ENCODE measurements at regions of chr16 and their contacts with region 1.

Region 1: GRCh38 chr16:9008601-9009260 is 45.0 kb upstream of the USP7 start:
- DNase-seq: peak; percentile 78
- H3K4me3 Mint-ChIP-seq: no peak overlapping the region
- H3K27ac Mint-ChIP-seq: no peak overlapping the region
- H3K4me1 Mint-ChIP-seq: peaks cover 4% of the 10 kb centered on the region
- H3K27me3 Mint-ChIP-seq: peaks cover 17% of the 10 kb centered on the region

Region 2: DNA sequence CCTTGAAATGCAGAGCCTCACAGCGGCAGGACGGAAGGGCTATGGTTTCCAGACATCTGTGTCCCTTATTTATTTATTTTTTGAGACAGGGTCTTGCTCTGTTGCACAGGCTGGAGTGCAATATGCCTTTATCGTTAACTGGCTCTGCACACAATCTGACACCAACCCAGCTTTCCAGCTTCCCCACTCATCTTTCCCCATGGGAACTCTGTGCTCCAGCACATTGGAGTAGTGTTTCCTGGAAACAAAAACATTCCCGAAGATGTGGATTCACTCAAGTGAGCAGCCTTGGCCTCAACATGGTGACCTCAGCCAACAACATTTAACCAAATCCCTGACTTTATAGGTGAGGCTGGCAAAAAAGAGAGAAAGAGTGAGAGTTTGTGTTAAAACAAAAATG is 725.5 kb before region 1 on chr16:
- CTCF ChIA-PET with region 1: no interaction called
- POLR2A ChIA-PET with region 1: no interaction called
- intact Hi-C with region 1: no loop called
- DNase-seq: no peak
- H3K4me3 Mint-ChIP-seq: no peak overlapping the region
- H3K27ac Mint-ChIP-seq: no peak overlapping the region
- H3K4me1 Mint-ChIP-seq: no peaks in the 10 kb centered on the region
- H3K27me3 Mint-ChIP-seq: no peaks in the 10 kb centered on the region

Region 3: DNA sequence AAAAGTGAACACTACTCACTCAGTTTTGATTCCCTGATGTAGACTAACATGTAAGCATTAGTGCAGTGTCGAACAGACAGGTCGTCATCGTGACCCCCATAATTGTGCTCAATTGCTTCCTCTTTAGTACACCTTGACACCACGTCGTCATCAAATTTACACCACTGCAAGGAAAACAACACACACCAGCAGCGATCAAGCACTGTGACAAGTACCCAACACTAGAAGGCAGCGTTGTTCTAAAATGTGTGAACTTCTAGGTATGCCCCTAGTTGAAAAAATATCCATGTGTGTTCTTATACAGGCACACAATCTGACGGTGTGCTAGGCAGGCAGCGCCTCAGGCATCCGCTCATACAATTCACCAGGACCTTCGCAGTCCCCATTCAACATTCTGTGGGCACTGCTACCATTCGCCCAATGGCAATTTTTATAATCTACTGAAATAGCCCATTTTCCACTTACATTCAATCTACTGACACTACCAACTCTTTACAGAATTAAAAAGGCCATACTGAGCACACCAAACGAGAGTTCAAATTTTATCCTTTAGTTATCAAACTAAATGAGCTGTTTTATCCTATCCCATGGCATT is 103.5 kb before region 1 on chr16:
- CTCF ChIA-PET with region 1: interaction called, 14 read pairs
- POLR2A ChIA-PET with region 1: no interaction called
- intact Hi-C with region 1: no loop called
- DNase-seq: no peak
- H3K4me3 Mint-ChIP-seq: no peak overlapping the region
- H3K27ac Mint-ChIP-seq: peak overlapping the region; percentile 8
- H3K4me1 Mint-ChIP-seq: peaks cover 18% of the 10 kb centered on the region
- H3K27me3 Mint-ChIP-seq: no peaks in the 10 kb centered on the region

Region 4: DNA sequence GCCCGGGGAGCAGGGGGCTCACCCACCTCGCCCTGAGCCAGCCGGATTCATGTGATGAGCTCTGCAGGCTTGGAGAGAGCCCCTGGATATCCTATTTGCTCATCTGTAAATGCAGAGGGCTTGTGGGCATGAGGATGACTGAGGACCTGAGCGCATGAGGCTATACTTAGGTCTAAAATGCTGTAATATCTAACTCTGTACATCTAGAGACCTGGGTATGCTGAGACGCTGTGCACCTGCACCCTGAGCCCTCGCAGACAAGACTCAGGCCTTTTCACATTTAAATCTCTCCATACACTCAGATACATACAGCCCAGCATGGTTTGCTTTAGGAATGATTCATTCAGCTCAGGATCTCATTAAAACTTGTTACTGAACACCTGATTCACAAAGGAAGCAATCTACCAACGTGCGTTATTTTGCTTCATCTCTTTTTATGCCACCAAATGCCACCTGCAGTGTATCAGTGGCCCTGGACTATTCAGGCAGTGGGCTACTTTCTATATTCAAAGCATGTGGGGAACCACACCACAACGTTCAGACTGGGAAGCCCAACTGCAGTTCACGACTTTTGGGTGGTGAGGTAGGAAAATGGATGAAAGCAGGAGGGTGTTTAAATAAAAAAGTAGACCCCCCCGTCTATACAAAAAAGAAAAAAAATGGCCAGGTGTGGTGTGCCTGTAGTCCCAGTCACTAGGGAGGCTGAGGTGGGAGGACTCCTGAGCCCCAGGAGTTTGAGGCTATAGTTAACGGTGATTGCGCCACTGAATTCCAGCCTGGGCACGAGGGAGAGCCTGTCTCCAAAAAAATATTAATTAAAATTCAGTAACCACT is 57.1 kb before region 1 on chr16:
- CTCF ChIA-PET with region 1: interaction called, 12 read pairs
- POLR2A ChIA-PET with region 1: no interaction called
- intact Hi-C with region 1: no loop called
- DNase-seq: no peak
- H3K4me3 Mint-ChIP-seq: peak overlapping the region; percentile 12
- H3K27ac Mint-ChIP-seq: peak overlapping the region; percentile 42
- H3K4me1 Mint-ChIP-seq: peaks cover 89% of the 10 kb centered on the region
- H3K27me3 Mint-ChIP-seq: no peaks in the 10 kb centered on the region

Region 5: GRCh38 chr16:8989099-8989878 is 19.4 kb before region 1 on chr16:
- CTCF ChIA-PET with region 1: interaction called, 11 read pairs
- POLR2A ChIA-PET with region 1: no interaction called
- intact Hi-C with region 1: no loop called
- DNase-seq: no peak
- H3K4me3 Mint-ChIP-seq: no peak overlapping the region
- H3K27ac Mint-ChIP-seq: no peak overlapping the region
- H3K4me1 Mint-ChIP-seq: no peaks in the 10 kb centered on the region
- H3K27me3 Mint-ChIP-seq: no peaks in the 10 kb centered on the region

Region 6: DNA sequence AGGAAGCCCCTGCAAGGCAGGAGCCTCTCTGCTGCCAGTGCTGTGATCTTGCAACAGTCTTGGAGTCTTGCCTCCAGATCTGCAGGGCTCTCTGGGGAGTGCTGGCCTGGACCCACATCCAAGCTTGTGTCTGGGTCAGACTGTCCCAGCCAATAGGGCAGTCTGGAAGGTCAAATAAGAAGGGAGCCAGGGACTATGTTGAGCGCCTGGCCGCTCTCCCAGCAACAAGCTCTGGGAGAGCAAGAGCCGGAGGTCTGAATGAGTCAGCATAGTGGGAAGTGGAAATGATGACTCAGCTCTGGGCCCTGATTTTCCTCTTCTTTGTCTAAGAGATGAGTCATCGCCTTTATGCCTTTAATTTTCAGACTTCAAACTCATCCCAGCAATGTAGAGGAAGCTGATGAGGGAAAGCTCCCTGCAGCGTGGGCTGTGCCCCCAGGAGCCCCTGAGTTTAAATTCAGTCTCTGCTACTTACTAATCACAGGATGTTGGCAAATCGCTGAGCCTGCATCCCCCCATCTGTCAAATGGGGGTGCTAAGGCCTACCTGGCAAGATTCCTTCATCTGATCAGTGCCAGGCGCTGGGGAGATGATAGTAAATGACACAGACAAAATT is 39.1 kb after region 1 on chr16:
- CTCF ChIA-PET with region 1: interaction called, 14 read pairs
- POLR2A ChIA-PET with region 1: interaction called, 3 read pairs
- intact Hi-C with region 1: no loop called
- DNase-seq: peak; percentile 81
- H3K4me3 Mint-ChIP-seq: no peak overlapping the region
- H3K27ac Mint-ChIP-seq: peak overlapping the region; percentile 66
- H3K4me1 Mint-ChIP-seq: peaks cover 37% of the 10 kb centered on the region
- H3K27me3 Mint-ChIP-seq: no peaks in the 10 kb centered on the region

Region 7: GRCh38 chr16:9125658-9126505 is 117.2 kb after region 1 on chr16:
- CTCF ChIA-PET with region 1: interaction called, 10 read pairs
- POLR2A ChIA-PET with region 1: no interaction called
- intact Hi-C with region 1: no loop called
- DNase-seq: no peak
- H3K4me3 Mint-ChIP-seq: no peak overlapping the region
- H3K27ac Mint-ChIP-seq: peak overlapping the region; percentile 38
- H3K4me1 Mint-ChIP-seq: peaks cover 53% of the 10 kb centered on the region
- H3K27me3 Mint-ChIP-seq: no peaks in the 10 kb centered on the region

Region 8: GRCh38 chr16:9134739-9135138 is 126.0 kb after region 1 on chr16:
- CTCF ChIA-PET with region 1: interaction called, 29 read pairs
- POLR2A ChIA-PET with region 1: no interaction called
- intact Hi-C with region 1: no loop called
- DNase-seq: peak; percentile 79
- H3K4me3 Mint-ChIP-seq: no peak overlapping the region
- H3K27ac Mint-ChIP-seq: no peak overlapping the region
- H3K4me1 Mint-ChIP-seq: peaks cover 12% of the 10 kb centered on the region
- H3K27me3 Mint-ChIP-seq: peaks cover 8% of the 10 kb centered on the region